Activated B cell treated with CpG ODN at 0.5 μM for 24 hours (primary cell): ENCODE measurements at regions of chr17 and their contacts with region 1.

Region 1: DNA sequence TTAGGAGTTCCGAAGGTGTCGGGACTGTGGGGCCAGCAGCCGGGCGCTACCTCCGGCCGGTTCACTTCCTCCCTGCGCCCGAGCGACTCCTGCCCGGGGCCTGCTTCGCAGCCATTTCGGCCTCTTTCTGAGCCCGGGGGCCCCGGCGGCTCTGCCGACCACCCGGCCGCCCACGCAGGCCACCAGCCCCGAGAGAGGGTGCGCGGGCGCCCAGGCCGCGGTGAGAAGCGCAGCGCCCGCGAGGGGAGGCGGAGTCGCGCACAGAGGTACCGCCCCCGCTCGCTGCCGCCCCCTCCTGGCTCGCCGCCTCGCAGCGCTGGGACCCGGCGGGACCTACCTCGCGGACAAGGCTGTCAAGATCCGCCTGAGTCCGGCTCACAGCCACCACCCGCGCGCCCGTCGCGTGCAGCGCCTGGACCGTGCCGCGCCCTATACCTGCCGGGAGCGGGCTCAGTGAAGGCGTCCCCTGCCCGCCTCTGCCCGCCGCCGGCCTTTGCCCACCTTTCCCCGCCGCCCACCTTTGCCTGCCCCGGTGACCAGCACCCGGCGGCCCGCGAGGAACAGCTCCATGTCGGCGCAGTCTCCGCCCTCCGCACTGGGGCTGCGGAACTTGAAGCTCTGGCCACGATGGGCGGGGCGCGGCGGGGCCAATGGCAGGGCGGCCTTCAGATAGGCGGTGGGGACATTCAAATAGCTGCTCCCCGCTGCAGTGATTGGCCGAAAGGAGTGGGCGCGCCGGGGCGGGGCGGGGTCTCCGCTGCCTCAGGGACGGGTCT is at the start of gene DCXR:
- DNase-seq: peak; percentile 95
- ATAC-seq: peak; percentile 93
- H3K4me3 Mint-ChIP-seq: peak within 1 kb of the TSS; percentile 86
- H3K27ac Mint-ChIP-seq: peak within 1 kb of the TSS; percentile 94
- H3K4me1 Mint-ChIP-seq: peaks cover 27% of the 10 kb centered on the region
- H3K27me3 Mint-ChIP-seq: no peaks in the 10 kb centered on the region
- CTCF ChIP-seq: no peak
- total RNA-seq, gene DCXR: 84.3 and 85.2 TPM in 2 replicates

Region 2: GRCh38 chr17:81135503-81136278 is 901.6 kb before region 1 on chr17:
- CTCF ChIA-PET with region 1: no interaction called
- POLR2A ChIA-PET with region 1: no interaction called
- intact Hi-C with region 1: no loop called
- DNase-seq: no peak
- ATAC-seq: no peak
- H3K4me3 Mint-ChIP-seq: no peak overlapping the region
- H3K27ac Mint-ChIP-seq: no peak overlapping the region
- H3K4me1 Mint-ChIP-seq: no peaks in the 10 kb centered on the region
- H3K27me3 Mint-ChIP-seq: no peaks in the 10 kb centered on the region
- CTCF ChIP-seq: no peak

Region 3: GRCh38 chr17:81977211-81978027 is 59.9 kb before region 1 on chr17 and contains the start of gene ASPSCR1:
- CTCF ChIA-PET with region 1: no interaction called
- POLR2A ChIA-PET with region 1: interaction called, 5 read pairs
- intact Hi-C with region 1: loop called (anchors 5 kb)
- DNase-seq: peak; percentile 94
- ATAC-seq: peak; percentile 92
- H3K4me3 Mint-ChIP-seq: peak within 1 kb of the TSS; percentile 95
- H3K27ac Mint-ChIP-seq: peak within 1 kb of the TSS; percentile 93
- H3K4me1 Mint-ChIP-seq: peaks cover 27% of the 10 kb centered on the region
- H3K27me3 Mint-ChIP-seq: no peaks in the 10 kb centered on the region
- CTCF ChIP-seq: no peak
- total RNA-seq, gene ASPSCR1: 40.0 and 50.0 TPM in 2 replicates

Region 4: GRCh38 chr17:82013341-82013740 is 24.0 kb before region 1 on chr17:
- CTCF ChIA-PET with region 1: no interaction called
- POLR2A ChIA-PET with region 1: no interaction called
- intact Hi-C with region 1: no loop called
- DNase-seq: no peak
- ATAC-seq: no peak
- H3K4me3 Mint-ChIP-seq: no peak overlapping the region
- H3K27ac Mint-ChIP-seq: no peak overlapping the region
- H3K4me1 Mint-ChIP-seq: no peaks in the 10 kb centered on the region
- H3K27me3 Mint-ChIP-seq: no peaks in the 10 kb centered on the region
- CTCF ChIP-seq: no peak

Region 5: DNA sequence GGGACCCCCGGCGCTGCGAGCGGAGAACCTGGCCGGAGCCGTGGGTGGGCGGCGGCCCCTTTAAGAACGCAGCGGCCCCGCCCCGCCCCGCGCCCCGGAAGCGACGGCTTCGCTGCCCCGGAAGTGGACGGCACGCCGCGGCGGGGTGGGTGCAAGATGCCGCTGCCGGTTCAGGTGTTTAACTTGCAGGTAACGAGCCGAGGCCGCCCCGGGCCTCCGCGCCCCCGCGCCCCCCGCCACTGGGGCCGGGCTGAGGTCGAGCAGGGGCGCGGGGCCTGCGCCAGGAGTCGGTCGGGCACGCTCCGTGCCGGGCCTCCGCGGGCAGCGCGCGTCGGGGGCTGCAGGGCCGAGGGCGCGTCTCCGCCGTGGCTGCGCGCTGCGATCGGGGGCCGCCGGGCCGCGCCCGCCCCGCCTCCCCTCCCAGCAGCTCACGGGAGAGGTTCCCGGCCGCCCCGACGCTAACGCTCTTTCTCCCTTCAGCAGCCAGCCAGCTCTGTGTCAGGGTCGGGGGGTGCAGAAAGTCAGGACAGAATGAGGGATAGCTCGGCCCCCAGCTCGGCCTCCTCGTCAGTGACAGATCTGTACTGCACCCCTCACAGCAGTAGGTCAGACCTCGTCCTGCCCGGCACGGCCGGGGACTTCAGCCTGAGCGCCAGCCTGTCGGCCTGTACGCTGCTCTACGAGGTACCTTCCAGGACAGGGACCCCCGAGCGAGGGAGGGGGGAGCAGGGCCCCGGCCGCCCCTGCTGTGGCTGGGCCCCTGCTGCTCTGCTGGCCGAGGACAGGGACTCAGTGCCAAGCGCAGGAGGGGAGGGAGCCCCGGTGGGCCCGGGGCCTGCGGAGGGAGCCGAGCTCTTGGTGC is 14.7 kb after region 1 on chr17 and contains the starts of genes GPS1 and RFNG:
- CTCF ChIA-PET with region 1: interaction called, 4 read pairs
- POLR2A ChIA-PET with region 1: interaction called, 30 read pairs
- intact Hi-C with region 1: loop called (anchors 1 kb)
- DNase-seq: peak; percentile 84
- ATAC-seq: peak; percentile 91
- H3K4me3 Mint-ChIP-seq: peak within 1 kb of the TSS; percentile 84
- H3K27ac Mint-ChIP-seq: peak within 1 kb of the TSS; percentile 78
- H3K4me1 Mint-ChIP-seq: peaks cover 17% of the 10 kb centered on the region
- H3K27me3 Mint-ChIP-seq: no peaks in the 10 kb centered on the region
- CTCF ChIP-seq: no peak
- total RNA-seq, gene GPS1: 88.7 and 94.7 TPM in 2 replicates
- total RNA-seq, gene RFNG: 17.7 and 18.7 TPM in 2 replicates

Region 6: GRCh38 chr17:82098072-82098821 is 60.9 kb after region 1 on chr17 and contains the start of gene FASN:
- CTCF ChIA-PET with region 1: interaction called, 4 read pairs
- POLR2A ChIA-PET with region 1: interaction called, 28 read pairs
- intact Hi-C with region 1: loop called (anchors 1 kb)
- DNase-seq: peak; percentile 90
- ATAC-seq: peak; percentile 78
- H3K4me3 Mint-ChIP-seq: peak within 1 kb of the TSS; percentile 73
- H3K27ac Mint-ChIP-seq: no peak within 1 kb of the TSS
- H3K4me1 Mint-ChIP-seq: peaks cover 16% of the 10 kb centered on the region
- H3K27me3 Mint-ChIP-seq: no peaks in the 10 kb centered on the region
- CTCF ChIP-seq: no peak
- total RNA-seq, gene FASN: 104 and 121 TPM in 2 replicates

Region 7: DNA sequence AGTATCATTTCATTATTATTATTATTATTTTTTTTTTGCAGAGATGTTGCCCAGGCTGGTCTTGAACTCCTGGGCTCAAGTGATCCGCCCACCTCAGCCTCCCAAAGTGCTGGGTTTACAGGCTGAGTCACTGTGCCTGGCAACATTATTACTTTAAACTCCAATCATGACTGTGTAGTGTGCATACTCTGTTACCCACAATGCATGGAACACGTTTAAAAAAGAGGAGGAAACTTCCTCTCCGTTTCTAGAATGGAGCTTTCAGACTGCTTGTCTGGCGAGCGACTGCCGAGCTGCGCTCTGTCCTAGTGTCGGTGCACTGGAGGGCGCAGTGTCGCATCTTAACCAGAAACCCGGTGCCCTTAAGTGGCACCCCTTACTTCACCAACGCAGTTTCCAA is 82.8 kb after region 1 on chr17:
- CTCF ChIA-PET with region 1: no interaction called
- POLR2A ChIA-PET with region 1: no interaction called
- intact Hi-C with region 1: no loop called
- DNase-seq: no peak
- ATAC-seq: no peak
- H3K4me3 Mint-ChIP-seq: no peak overlapping the region
- H3K27ac Mint-ChIP-seq: no peak overlapping the region
- H3K4me1 Mint-ChIP-seq: no peaks in the 10 kb centered on the region
- H3K27me3 Mint-ChIP-seq: no peaks in the 10 kb centered on the region
- CTCF ChIP-seq: no peak

Region 8: DNA sequence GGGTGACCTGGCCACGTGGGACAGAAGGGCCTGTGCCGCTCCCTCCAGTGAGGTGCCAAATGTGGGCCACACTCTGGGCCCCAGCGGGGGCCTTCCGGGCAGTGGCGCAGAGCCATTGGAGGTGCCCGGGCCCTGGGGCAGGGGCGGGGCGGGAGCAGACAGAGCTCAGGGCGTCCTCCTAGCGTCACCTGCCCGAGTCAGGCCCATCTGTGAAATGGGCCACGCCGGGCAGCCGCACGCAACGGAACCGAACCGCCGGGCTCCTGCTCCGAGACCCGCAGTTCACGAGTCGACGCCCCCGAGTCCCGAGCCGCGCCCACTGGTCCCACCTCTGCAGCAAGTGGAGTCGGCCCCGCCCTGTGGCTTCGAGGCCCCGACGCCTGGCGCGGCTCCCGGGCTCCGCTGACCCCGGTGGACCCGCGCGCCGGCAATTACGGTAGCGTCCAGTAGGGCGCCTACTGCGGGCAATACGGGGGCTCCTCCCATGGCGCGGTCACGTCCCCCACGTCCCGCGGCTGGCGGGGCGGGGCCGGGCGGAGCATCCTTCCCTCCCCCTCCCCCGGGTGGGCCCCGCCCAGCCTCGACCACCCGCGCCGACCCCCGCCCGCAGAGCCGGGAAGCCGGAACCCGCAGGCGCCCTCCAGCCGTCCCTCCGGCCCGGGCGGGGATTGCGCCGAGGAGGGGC is 193.5 kb after region 1 on chr17:
- CTCF ChIA-PET with region 1: no interaction called
- POLR2A ChIA-PET with region 1: interaction called, 3 read pairs
- intact Hi-C with region 1: loop called (anchors 5 kb)
- DNase-seq: peak; percentile 68
- ATAC-seq: peak; percentile 49
- H3K4me3 Mint-ChIP-seq: peak overlapping the region; percentile 78
- H3K27ac Mint-ChIP-seq: no peak overlapping the region
- H3K4me1 Mint-ChIP-seq: peaks cover 33% of the 10 kb centered on the region
- H3K27me3 Mint-ChIP-seq: no peaks in the 10 kb centered on the region
- CTCF ChIP-seq: no peak